Mammary epithelial cell (primary cell): ENCODE measurements at regions of chr6 and their contacts with region 1.

Region 1: GRCh38 chr6:11732036-11732631 is 46.5 kb downstream of the ADTRP start:
- DNase-seq: no peak
- H3K4me3 ChIP-seq: no peak overlapping the region
- H3K27ac ChIP-seq: no peak overlapping the region
- H3K4me1 ChIP-seq: no peaks in the 10 kb centered on the region
- H3K27me3 ChIP-seq: no peaks in the 10 kb centered on the region
- CTCF ChIP-seq: no peak

Region 2: DNA sequence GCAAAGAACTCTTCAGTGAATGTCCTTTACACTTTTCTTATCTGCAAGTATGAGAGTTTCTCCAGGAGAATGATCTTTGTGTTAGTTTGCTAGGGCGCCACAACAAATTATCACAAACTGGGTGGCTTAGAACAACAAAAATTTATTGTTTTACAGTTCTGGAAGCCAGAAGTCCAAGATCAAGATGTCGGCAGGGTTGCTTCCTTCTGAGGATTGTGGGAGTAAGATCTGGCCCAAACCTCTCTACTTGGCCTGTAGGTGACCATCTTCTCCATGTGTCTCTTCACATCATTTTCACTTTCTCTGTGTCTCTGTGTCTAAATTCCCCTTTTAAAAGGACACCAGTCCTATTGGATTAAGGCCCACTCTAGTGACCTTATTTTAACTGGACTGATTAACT is 56.5 kb before region 1 on chr6:
- CTCF ChIA-PET with region 1: no interaction called
- dilution Hi-C with region 1: loop called (anchors 5 kb)
- in situ Hi-C with region 1: no loop called
- intact Hi-C with region 1: no loop called
- DNase-seq: peak; percentile 42
- H3K4me3 ChIP-seq: no peak overlapping the region
- H3K27ac ChIP-seq: no peak overlapping the region
- H3K4me1 ChIP-seq: no peaks in the 10 kb centered on the region
- H3K27me3 ChIP-seq: no peaks in the 10 kb centered on the region
- CTCF ChIP-seq: no peak

Region 3: GRCh38 chr6:11754625-11755271 is 22.6 kb after region 1 on chr6:
- CTCF ChIA-PET with region 1: no interaction called
- dilution Hi-C with region 1: no loop called
- in situ Hi-C with region 1: no loop called
- intact Hi-C with region 1: no loop called
- DNase-seq: peak; percentile 46
- H3K4me3 ChIP-seq: no peak overlapping the region
- H3K27ac ChIP-seq: peak overlapping the region; percentile 36
- H3K4me1 ChIP-seq: peaks cover 13% of the 10 kb centered on the region
- H3K27me3 ChIP-seq: no peaks in the 10 kb centered on the region
- CTCF ChIP-seq: no peak

Region 4: GRCh38 chr6:11815231-11815630 is 83.1 kb after region 1 on chr6:
- CTCF ChIA-PET with region 1: no interaction called
- dilution Hi-C with region 1: no loop called
- in situ Hi-C with region 1: no loop called
- intact Hi-C with region 1: no loop called
- DNase-seq: no peak
- H3K4me3 ChIP-seq: no peak overlapping the region
- H3K27ac ChIP-seq: no peak overlapping the region
- H3K4me1 ChIP-seq: peaks cover 22% of the 10 kb centered on the region
- H3K27me3 ChIP-seq: no peaks in the 10 kb centered on the region
- CTCF ChIP-seq: no peak

Region 5: DNA sequence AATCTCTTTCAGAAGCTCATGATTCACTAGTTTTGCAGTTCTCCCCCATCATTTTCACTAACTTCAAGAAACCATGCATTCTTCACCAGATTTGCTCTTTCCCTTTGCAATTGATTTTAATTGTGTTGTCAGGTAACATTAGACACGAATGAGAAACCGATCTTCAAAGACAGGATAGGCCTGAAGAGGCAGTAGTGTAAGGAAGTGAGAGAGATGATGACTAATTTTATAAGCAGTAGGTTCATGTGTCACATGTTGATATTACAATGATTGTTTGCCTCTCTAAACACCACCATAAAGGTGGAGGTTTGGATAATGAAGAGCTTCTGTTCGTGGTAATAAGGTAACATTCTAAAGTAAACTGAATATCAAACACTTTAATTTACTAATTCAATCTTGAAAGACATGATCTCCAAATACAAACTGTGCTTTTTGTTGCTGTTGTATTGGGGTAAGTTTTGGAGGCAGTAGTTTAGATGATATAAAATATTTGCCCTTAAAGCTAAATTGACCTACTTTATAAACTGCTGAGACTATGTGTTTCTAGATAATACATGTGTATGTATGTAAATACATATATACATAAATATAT is 1191.6 kb after region 1 on chr6:
- CTCF ChIA-PET with region 1: no interaction called
- dilution Hi-C with region 1: no loop called
- in situ Hi-C with region 1: no loop called
- intact Hi-C with region 1: no loop called
- DNase-seq: no peak
- H3K4me3 ChIP-seq: no peak overlapping the region
- H3K27ac ChIP-seq: no peak overlapping the region
- H3K4me1 ChIP-seq: no peaks in the 10 kb centered on the region
- H3K27me3 ChIP-seq: no peaks in the 10 kb centered on the region
- CTCF ChIP-seq: no peak